ENCODE measurements at regions of chr10 and their contacts with region 1.

Region 1: DNA sequence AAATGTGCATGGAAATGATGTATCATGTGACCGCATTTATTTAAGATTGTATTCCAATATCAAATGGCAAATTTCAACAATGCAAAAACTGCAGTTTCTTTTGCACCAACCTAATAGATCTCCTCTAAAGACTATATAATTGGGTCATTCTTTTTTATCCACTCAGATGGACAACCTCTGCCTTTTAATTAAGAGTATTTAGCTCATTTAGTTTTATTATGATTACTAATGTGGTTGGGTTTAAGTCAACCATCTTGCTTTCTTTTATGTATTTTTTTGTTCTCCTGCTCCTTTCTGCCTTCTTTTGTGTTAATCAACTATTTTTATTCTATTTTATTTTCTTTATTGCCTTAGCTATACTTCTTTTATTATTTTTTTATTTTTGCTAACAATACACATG is 468.5 kb upstream of the MKI67 start:
- DNase-seq: no peak
- ATAC-seq: no peak
- H3K4me3 ChIP-seq: no peak overlapping the region
- H3K4me3 Mint-ChIP-seq: no peak overlapping the region
- H3K27ac ChIP-seq: no peak overlapping the region
- H3K27ac Mint-ChIP-seq: no peak overlapping the region
- H3K4me1 ChIP-seq: no peaks in the 10 kb centered on the region
- H3K4me1 Mint-ChIP-seq: no peaks in the 10 kb centered on the region
- H3K27me3 ChIP-seq: no peaks in the 10 kb centered on the region
- H3K27me3 Mint-ChIP-seq: no peaks in the 10 kb centered on the region
- CTCF ChIP-seq: no peak

Region 2: DNA sequence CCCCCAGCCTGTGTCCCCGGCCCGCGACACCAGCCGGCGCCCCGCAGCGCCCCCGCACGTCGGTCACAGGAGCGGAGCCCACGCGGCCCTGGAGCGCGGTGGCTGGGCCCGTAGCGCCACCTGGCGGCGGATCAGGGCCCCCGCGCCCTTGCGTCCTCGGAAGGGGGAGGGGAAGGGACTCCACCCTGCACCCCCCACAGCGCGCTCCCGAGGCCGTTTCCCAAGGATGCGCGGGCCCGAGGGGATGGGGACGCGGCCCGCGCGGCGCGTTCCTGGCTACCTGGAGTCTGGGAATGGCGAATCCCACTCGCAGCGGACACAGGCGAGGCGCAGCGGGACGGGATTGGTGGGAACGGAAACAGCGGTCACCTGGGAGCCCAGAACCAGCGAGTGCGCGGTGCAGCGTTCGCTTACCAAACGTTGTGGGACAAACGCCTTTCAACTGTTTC is 444.6 kb before region 1 on chr10:
- CTCF ChIA-PET with region 1: no interaction called
- POLR2A ChIA-PET with region 1: no interaction called
- intact Hi-C with region 1: no loop called
- DNase-seq: peak; percentile 62 to 94 (median 72)
- ATAC-seq: peak; percentile 98
- H3K4me3 ChIP-seq: peak overlapping the region; percentile 73
- H3K4me3 Mint-ChIP-seq: peak overlapping the region; percentile 69
- H3K27ac ChIP-seq: no peak overlapping the region
- H3K27ac Mint-ChIP-seq: no peak overlapping the region
- H3K4me1 ChIP-seq: peaks cover 11% of the 10 kb centered on the region
- H3K4me1 Mint-ChIP-seq: no peaks in the 10 kb centered on the region
- H3K27me3 ChIP-seq: peaks cover 0 to 2% of the 10 kb centered on the region in 2 experiments
- H3K27me3 Mint-ChIP-seq: no peaks in the 10 kb centered on the region
- CTCF ChIP-seq: peak; percentile 77

Region 3: GRCh38 chr10:128530301-128530700 is 64.4 kb before region 1 on chr10:
- CTCF ChIA-PET with region 1: no interaction called
- POLR2A ChIA-PET with region 1: no interaction called
- intact Hi-C with region 1: no loop called
- DNase-seq: no peak
- ATAC-seq: no peak
- H3K4me3 ChIP-seq: no peak overlapping the region
- H3K4me3 Mint-ChIP-seq: no peak overlapping the region
- H3K27ac ChIP-seq: no peak overlapping the region
- H3K27ac Mint-ChIP-seq: no peak overlapping the region
- H3K4me1 ChIP-seq: no peaks in the 10 kb centered on the region
- H3K4me1 Mint-ChIP-seq: no peaks in the 10 kb centered on the region
- H3K27me3 ChIP-seq: peaks cover under 1 to 7% of the 10 kb centered on the region in 2 experiments
- H3K27me3 Mint-ChIP-seq: peaks cover 34% of the 10 kb centered on the region
- CTCF ChIP-seq: no peak

Region 4: GRCh38 chr10:128642023-128642422 is 47.3 kb after region 1 on chr10:
- CTCF ChIA-PET with region 1: no interaction called
- POLR2A ChIA-PET with region 1: no interaction called
- intact Hi-C with region 1: loop called in 1 of 2 experiments (anchors 5 kb)
- DNase-seq: no peak
- ATAC-seq: no peak
- H3K4me3 ChIP-seq: no peak overlapping the region
- H3K4me3 Mint-ChIP-seq: no peak overlapping the region
- H3K27ac ChIP-seq: no peak overlapping the region
- H3K27ac Mint-ChIP-seq: no peak overlapping the region
- H3K4me1 ChIP-seq: no peaks in the 10 kb centered on the region
- H3K4me1 Mint-ChIP-seq: no peaks in the 10 kb centered on the region
- H3K27me3 ChIP-seq: no peaks in the 10 kb centered on the region
- H3K27me3 Mint-ChIP-seq: no peaks in the 10 kb centered on the region
- CTCF ChIP-seq: no peak